ENCODE measurements at regions of chr13 and their contacts with region 1.

Region 1: GRCh38 chr13:41652727-41653361 is 195.5 kb downstream of the RGCC start:
- DNase-seq: peak in 1 of 5 donors; percentile 27
- H3K4me3 ChIP-seq: no peak overlapping the region
- H3K27ac ChIP-seq: no peak overlapping the region
- H3K4me1 ChIP-seq: no peaks in the 10 kb centered on the region
- H3K27me3 ChIP-seq: no peaks in the 10 kb centered on the region
- CTCF ChIP-seq: peak in 2 of 3 donors; percentile 30 to 52
- EP300 ChIP-seq: no peak
- POLR2A ChIP-seq: no peak

Region 2: GRCh38 chr13:41352935-41353840 is 299.7 kb before region 1 on chr13:
- intact Hi-C with region 1: loop called in 1 of 4 experiments (anchors 10 kb)
- DNase-seq: peak in 1 of 5 donors; percentile 37
- H3K4me3 ChIP-seq: no peak overlapping the region
- H3K27ac ChIP-seq: no peak overlapping the region
- H3K4me1 ChIP-seq: no peaks in the 10 kb centered on the region
- H3K27me3 ChIP-seq: no peaks in the 10 kb centered on the region
- CTCF ChIP-seq: peak; percentile 47 to 66 (median 52)
- EP300 ChIP-seq: no peak
- POLR2A ChIP-seq: no peak

Measured in ovary (tissue), 10 donors.